ENCODE measurements at regions of chr9 and their contacts with region 1.

Region 1: GRCh38 chr9:124309665-124310064 is 51.9 kb downstream of the NEK6 start:
- DNase-seq: peak; percentile 98
- H3K4me3 ChIP-seq: no peak overlapping the region
- H3K27ac ChIP-seq: peak overlapping the region; percentile 61
- H3K4me1 ChIP-seq: peaks cover 22% of the 10 kb centered on the region
- H3K27me3 ChIP-seq: no peaks in the 10 kb centered on the region

Region 2: GRCh38 chr9:123710299-123710698 is 599.4 kb before region 1 on chr9:
- in situ Hi-C with region 1: no loop called
- DNase-seq: peak; percentile 74
- H3K4me3 ChIP-seq: no peak overlapping the region
- H3K27ac ChIP-seq: no peak overlapping the region
- H3K4me1 ChIP-seq: 0 out of 2 replicates have a peak, but pooled peaks cover 5% of the 10 kb centered on the region
- H3K27me3 ChIP-seq: no peaks in the 10 kb centered on the region

Region 3: GRCh38 chr9:124133727-124134126 is 175.9 kb before region 1 on chr9:
- in situ Hi-C with region 1: loop called (anchors 10 kb)
- DNase-seq: peak; percentile 59
- H3K4me3 ChIP-seq: no peak overlapping the region
- H3K27ac ChIP-seq: no peak overlapping the region
- H3K4me1 ChIP-seq: 0 out of 2 replicates have a peak, but pooled peaks cover 7% of the 10 kb centered on the region
- H3K27me3 ChIP-seq: no peaks in the 10 kb centered on the region

Region 4: DNA sequence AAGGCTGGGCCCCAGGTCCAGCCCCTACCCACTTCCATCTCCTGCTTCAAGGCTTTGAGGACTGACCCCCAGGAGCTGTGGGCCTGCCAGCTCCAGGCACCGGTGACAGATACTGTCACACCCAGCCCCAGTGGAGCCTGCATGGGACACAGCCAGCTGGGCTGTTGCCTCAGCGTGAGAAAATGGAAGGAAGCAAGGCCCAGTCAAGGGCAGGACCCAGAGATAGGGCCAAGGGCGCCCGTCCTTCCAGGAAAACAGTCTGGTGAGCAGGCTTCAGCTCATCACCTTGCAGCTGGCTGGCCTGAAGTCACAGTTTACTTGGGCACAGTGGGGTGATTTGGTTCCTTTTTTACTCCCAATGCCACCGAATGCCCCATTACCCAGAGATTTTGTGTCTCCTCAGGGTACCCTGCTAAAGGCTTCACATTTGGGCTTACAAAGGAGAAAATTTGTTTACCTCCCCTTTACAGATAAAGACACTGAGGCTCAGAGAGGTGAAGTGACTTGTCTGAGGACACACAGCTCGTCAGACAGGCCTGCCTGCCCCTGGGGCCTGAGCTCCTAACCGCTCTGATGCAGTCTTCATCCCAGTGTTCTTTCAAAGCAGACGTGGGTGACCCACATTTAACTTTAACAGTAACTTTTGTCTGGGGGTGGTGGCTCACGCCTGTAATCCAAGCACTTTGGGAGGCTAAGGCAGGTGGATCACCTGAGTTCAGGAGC is 522.1 kb after region 1 on chr9:
- in situ Hi-C with region 1: no loop called
- DNase-seq: no peak
- H3K4me3 ChIP-seq: no peak overlapping the region
- H3K27ac ChIP-seq: peak overlapping the region; percentile 19
- H3K4me1 ChIP-seq: peaks cover 22% of the 10 kb centered on the region
- H3K27me3 ChIP-seq: no peaks in the 10 kb centered on the region